Posterior vena cava (tissue), 2 donors: ENCODE measurements at regions of chr7 and their contacts with region 1.

Region 1: DNA sequence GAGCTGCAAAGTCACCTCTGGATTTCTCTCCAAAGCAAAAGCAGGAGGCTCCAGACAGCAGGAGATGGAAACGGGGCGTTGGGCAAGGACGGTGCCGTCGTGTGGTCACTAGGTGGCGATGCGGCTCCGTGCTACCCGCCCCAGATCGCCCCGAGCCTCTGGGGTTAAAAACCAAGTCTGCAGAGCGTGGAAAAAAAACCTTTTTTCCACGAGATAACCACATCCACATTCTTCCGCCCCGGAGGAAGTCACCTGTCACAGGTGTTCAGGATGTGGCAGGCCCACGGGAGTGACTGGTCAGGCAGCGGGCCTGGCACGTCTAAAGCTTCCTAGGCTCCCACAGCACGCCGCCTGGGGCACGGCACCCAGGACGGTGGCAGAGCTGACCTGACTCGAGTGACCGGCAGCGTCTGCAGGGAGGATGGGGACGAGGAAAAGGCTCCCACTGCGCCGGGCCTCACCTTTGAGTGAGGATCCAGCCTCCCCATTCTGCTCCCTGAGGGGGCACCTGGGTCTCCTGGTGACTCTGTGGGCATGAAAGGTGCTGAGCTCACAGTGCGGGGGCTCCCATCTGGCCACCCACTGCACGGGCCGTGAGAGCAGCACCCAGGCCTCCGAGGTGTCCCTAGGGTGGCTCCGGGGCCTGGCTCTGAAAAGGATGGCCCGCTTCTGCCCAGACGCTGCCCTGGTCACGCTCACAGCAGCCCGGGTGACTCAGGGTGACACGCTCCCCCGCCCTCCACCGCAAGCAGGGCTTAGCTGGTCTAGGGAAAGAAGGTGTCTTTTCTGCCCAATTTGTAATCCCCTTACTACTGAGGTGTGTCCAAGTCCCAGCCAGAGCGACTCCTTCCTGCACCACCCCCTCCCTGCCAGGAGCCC is 71.3 kb upstream of the TNRC18 start:
- DNase-seq: peak; percentile 91

Region 2: GRCh38 chr7:5450549-5451372 is 44.2 kb before region 1 on chr7:
- intact Hi-C with region 1: no loop called
- DNase-seq: no peak

Region 3: GRCh38 chr7:5665094-5666025 is 170.4 kb after region 1 on chr7:
- intact Hi-C with region 1: loop called in 1 of 2 experiments (anchors 5 kb)
- DNase-seq: peak; percentile 81

Region 4: GRCh38 chr7:5677538-5678294 is 182.8 kb after region 1 on chr7:
- intact Hi-C with region 1: loop called in 1 of 2 experiments (anchors 5 kb)
- DNase-seq: peak; percentile 88